ENCODE measurements at regions of chr10 and their contacts with region 1.

Region 1: GRCh38 chr10:101569838-101570766 is 18.0 kb downstream of the POLL start:
- DNase-seq: peak; percentile 92
- CTCF ChIP-seq: peak; percentile 83

Region 2: GRCh38 chr10:101161494-101162299 is 408.4 kb before region 1 on chr10:
- CTCF ChIA-PET with region 1: interaction called, 17 read pairs
- POLR2A ChIA-PET with region 1: no interaction called
- DNase-seq: peak; percentile 81
- CTCF ChIP-seq: peak; percentile 95

Region 3: DNA sequence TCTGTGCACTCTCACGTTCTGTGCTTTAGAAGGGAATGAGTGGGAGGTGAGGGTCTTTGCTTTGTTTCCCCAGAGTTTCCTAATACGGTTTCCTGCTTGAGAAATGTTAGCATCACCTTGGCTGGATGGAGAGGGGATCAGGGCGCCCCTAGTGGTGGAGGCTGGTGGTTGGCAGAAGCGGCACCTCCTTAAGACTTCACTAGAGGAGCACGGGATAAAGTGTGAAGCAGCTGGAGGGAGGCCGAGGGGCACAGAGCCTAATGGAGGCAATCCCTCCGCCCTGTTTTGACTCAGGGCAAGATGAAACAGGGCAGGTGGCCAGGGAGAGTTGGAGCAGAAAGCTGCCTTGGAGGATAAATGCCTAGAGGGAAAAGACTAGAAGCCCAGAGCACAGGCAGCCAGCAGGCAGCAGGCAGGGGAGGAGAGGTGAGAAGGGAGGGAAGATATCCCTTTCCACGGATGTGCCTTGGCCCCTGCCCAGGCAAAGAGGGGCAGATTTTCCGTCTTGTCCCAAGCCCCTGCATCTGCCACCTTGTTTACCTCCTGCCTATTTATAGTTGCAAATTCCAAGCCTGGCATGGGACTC is 272.1 kb before region 1 on chr10:
- CTCF ChIA-PET with region 1: interaction called, 24 read pairs
- POLR2A ChIA-PET with region 1: no interaction called
- DNase-seq: peak; percentile 75
- CTCF ChIP-seq: peak; percentile 89

Region 4: DNA sequence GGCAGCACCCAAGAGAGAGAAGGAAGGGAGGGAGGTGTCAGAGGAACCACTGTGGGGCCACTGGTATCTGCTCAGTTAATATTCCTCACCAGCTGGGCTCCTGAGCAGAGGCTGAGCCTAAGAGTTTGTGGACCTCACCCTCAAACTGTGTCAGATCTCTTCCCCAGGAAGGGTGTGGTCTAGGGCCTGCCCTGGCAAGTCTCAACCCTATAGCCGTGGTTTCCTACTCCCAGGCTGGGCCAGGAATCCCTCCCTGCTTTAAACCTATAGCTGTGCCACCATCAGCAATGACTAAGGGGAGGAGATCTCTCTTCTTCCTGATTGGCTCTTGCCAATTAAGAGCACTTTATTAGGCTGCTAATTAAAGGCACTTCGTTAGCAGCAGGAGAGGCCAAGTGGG is 11.9 kb before region 1 on chr10:
- CTCF ChIA-PET with region 1: interaction called, 41 read pairs
- POLR2A ChIA-PET with region 1: no interaction called
- DNase-seq: no peak
- CTCF ChIP-seq: no peak

Region 5: GRCh38 chr10:101602761-101603398 is 32.8 kb after region 1 on chr10:
- CTCF ChIA-PET with region 1: interaction called, 10 read pairs
- POLR2A ChIA-PET with region 1: no interaction called
- DNase-seq: peak; percentile 84
- CTCF ChIP-seq: peak; percentile 96